GM10248 (cell line): ENCODE measurements at regions of chr15 and their contacts with region 1.

Region 1: DNA sequence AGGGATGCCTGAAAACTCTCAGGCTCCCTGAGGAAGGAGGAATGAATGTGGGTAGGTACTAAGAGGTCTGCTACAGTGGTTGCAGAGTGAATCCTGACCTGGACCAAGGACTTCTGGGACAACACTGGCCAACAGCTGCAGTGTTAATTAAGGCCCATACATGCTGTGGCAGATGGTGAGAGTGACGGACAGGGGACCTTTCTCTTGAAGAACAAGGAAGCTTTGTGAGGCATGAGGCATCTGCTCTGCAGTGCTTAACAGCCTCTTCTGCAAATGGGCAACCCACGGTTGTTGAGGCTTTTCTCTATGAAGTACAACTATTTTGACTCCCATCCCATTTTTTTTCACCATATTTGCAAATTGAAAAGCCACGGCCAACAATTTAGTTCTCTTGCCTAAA is 26.6 kb upstream of the ACAN start:
- DNase-seq: no peak
- CTCF ChIP-seq: no peak

Region 2: GRCh38 chr15:88791637-88792036 is 15.0 kb after region 1 on chr15:
- CTCF ChIA-PET with region 1: interaction called, 15 read pairs
- POLR2A ChIA-PET with region 1: no interaction called
- DNase-seq: no peak
- CTCF ChIP-seq: no peak